ENCODE measurements at regions of chr1 and their contacts with region 1.

Region 1: DNA sequence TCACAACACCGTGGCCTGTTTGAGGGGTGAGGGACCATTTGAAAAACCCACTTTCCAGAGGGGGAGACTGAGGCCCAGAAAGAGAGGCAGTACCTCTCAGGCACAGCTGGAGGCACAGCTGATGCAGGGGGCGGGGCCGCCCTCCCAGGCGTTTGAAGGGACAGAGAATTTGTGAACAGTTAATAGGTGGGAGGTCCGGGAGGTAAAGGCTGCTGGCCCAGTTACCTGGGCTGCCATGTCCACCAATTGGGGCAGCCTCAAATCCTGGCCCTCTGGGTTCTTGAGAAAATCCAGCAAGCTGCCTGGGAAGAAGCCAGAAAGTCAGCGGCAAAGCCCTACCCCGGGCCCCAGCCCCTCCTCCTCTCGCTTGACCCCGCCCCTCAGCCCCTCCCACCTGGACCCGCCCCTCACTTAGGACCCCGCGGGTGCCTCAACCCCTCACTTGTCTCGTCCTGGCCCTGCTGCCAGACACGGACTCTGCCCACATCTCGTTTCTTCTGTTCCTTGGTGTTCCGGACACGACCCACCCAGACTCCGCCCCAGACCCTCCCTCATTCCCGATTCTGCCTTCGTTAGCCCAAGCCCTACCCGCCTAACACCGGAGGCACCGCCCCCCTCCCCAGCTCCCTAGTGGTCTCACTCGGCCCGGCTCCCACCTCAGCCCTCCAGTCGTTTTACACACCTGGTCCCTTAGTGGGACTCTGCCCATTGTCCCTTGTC is 10.8 kb upstream of the AHDC1 start:
- DNase-seq: no peak
- ATAC-seq: peak in 1 of 2 donors; percentile 15

Region 2: DNA sequence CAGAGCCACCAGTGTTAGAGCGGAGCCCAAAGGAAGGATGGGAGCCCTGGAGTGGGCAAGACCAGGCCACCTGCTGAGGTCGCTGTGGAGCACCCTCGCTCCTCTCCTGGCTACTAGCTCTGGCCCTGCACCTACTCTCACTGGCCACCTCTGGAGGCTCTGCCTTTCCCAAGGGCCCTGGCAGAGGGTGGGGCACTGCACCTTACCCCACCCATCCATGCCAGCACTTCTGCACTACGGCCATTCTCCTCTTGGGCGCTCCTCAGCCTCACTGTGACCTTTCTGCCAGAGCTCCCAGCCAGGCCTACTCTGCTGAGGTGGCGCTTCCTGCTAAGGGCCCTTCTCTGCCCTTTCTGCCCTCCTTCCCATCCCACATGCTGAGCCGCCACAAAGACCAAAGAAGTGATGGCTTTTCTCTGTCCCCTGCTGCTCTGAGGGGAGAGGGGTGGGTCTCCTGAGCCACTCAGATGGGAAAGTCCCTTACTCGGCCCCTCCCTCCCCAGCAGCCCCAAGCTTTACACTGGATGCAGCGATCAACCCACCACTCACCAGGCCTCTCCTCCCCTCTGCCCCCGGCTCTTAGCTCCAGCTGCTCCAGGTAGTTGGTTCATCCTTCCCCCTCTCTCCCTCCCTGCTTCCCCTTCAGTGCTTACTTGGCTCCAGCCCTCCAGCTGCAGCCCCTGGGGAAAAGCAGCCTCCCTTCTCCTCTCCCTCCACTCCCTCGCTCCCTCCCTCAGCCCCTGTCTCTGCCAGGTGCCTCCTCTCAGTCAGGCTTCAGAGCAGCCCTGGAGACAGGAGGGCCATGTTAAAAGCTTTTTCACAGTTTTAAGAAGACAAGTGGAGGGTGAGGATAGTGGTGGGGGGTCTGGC is 307.7 kb before region 1 on chr1:
- intact Hi-C with region 1: loop called in 1 of 2 experiments (anchors 5 kb)
- DNase-seq: no peak
- ATAC-seq: peak in 1 of 2 donors; percentile 27

Region 3: GRCh38 chr1:27556781-27557595 is 57.8 kb before region 1 on chr1:
- intact Hi-C with region 1: no loop called
- DNase-seq: peak; percentile 96
- ATAC-seq: peak; percentile 71 to 79